Activated CD8-positive, alpha-beta T cell treated with anti-CD3 and anti-CD28 coated beads for 36 hours (primary cell): ENCODE measurements at regions of chr1 and their contacts with region 1.

Region 1: GRCh38 chr1:23496490-23497181 is 12.7 kb upstream of the ASAP3 start:
- DNase-seq: no peak
- ATAC-seq: peak; percentile 13
- H3K4me3 Mint-ChIP-seq: no peak overlapping the region
- H3K27ac Mint-ChIP-seq: no peak overlapping the region
- H3K4me1 Mint-ChIP-seq: no peaks in the 10 kb centered on the region
- H3K27me3 Mint-ChIP-seq: no peaks in the 10 kb centered on the region
- CTCF ChIP-seq: no peak

Region 2: DNA sequence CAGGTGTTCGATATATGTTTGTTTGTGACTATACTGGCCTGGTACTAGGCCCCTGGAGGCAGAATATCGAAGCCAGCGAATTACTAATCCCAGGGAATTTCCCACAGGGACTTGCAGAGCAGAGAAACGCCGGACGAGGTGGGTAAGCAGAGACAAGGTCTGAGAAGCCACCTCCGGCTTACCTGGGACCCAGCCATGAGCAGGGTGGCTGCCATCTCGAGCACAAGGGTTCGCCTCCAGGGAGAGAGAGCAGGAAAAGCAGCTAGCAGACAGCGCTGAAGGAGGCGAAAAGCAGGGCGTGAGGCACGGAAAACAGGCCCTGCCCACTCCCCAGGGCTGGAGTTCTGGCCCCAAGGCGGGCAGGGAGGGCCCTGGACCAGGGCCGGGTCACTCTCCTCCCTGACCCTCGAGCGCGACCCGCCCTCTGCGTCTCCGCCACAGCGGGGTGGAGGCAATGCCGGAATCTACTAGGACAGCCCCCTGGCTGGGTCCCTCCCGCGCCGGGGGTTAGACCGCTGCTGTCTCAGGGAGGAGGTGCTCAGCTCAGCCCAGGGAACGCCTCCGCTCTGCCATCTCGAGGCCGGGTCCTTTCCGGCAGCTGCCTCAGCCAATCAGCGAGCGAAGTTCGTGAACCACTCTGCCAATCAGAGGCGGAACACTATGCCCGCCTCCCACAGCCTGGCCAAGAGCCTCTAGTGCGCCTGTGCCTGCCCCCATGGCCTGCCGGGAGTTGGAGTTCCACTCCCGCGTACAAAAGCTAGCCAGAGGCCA is 128.7 kb before region 1 on chr1:
- CTCF ChIA-PET with region 1: interaction called, 13 read pairs
- POLR2A ChIA-PET with region 1: no interaction called
- intact Hi-C with region 1: no loop called
- DNase-seq: peak; percentile 99
- ATAC-seq: peak; percentile 94
- H3K4me3 Mint-ChIP-seq: peak overlapping the region; percentile 95
- H3K27ac Mint-ChIP-seq: peak overlapping the region; percentile 98
- H3K4me1 Mint-ChIP-seq: peaks cover 26% of the 10 kb centered on the region
- H3K27me3 Mint-ChIP-seq: no peaks in the 10 kb centered on the region
- CTCF ChIP-seq: no peak

Region 3: DNA sequence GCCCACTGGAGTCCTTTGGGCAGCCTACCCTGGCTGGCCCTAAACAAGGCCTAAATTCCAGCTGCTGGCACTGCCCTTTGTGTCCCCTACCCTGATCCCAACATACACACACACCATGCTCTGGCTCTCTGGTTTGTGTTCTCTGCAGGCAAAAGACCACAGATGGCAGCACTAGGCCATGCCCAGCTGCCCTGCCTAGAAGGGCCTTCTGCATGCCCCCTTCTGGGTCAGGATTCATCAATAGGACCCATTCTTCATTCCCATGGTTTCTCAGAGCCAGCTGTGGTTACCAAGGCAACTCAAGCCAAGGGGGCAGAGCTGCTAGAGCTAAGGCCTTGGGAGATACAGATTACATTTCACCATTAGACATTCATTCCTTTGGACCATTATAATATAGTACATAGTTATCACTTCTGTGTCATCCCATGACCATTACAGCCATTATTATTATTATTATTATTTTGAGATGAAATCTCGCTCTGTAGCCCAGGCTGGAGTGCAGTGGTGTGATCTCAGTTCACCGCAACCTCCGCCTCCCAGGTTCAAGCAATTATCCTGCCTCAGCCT is 30.1 kb before region 1 on chr1:
- CTCF ChIA-PET with region 1: interaction called, 20 read pairs
- POLR2A ChIA-PET with region 1: no interaction called
- intact Hi-C with region 1: no loop called
- DNase-seq: no peak
- ATAC-seq: no peak
- H3K4me3 Mint-ChIP-seq: no peak overlapping the region
- H3K27ac Mint-ChIP-seq: no peak overlapping the region
- H3K4me1 Mint-ChIP-seq: no peaks in the 10 kb centered on the region
- H3K27me3 Mint-ChIP-seq: no peaks in the 10 kb centered on the region
- CTCF ChIP-seq: no peak

Region 4: DNA sequence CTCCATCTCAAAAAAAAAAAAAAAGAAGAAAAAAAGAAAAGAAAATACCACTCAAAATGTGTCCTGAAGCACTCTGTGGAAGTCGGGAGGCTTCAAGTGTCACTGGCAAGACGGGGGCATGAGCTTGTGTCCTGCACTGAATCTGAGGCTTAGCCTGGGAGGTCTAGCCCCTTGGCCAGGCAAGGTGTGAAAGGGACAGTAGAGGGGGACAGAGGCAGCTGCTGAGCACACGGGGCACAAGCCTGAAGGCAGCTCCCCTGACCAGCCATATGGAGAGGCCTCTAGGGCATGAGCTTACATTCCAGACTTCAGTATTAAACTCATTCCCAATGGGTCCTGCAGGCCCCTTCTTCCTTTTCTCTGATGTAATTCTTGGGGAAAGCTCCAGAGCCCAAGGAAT is 10.9 kb after region 1 on chr1:
- CTCF ChIA-PET with region 1: interaction called, 43 read pairs
- POLR2A ChIA-PET with region 1: no interaction called
- intact Hi-C with region 1: no loop called
- DNase-seq: no peak
- ATAC-seq: no peak
- H3K4me3 Mint-ChIP-seq: no peak overlapping the region
- H3K27ac Mint-ChIP-seq: no peak overlapping the region
- H3K4me1 Mint-ChIP-seq: no peaks in the 10 kb centered on the region
- H3K27me3 Mint-ChIP-seq: no peaks in the 10 kb centered on the region
- CTCF ChIP-seq: no peak

Region 5: DNA sequence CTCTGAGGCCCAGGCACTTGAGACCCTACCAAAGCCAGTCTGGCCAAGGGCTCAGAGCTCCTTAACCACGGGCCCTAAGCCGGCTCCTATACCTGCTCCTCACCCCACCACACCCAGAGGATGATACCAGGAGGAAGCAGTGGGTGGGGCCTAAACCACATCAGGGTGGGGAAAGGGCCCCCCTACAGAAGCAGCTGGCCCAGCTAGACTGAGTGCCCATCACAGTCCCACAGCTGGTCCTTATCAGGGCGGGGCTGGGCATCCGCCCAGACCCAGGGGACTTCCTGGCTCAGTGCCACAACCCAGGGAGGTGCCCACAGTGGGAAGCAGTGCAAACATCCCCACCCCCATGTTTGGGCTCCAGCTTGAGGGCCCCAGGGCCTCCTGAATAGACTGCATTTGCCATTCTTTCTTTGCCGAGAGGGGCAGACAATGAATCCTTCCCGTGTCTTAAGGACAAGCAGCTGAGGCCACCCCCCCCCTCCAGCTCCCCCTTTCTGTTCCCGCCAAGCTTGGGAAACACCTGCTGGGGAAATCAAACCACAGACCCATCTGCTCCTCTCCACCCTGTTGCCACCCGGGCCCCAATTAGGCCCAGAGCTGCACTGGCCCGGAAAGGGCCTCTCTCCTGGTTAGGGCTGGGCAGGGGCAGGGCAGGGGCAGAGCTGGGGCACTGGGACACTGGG is 28.2 kb after region 1 on chr1:
- CTCF ChIA-PET with region 1: interaction called, 202 read pairs
- POLR2A ChIA-PET with region 1: interaction called, 10 read pairs
- intact Hi-C with region 1: no loop called
- DNase-seq: peak; percentile 42
- ATAC-seq: peak; percentile 12
- H3K4me3 Mint-ChIP-seq: no peak overlapping the region
- H3K27ac Mint-ChIP-seq: no peak overlapping the region
- H3K4me1 Mint-ChIP-seq: peaks cover 59% of the 10 kb centered on the region
- H3K27me3 Mint-ChIP-seq: no peaks in the 10 kb centered on the region
- CTCF ChIP-seq: no peak

Region 6: GRCh38 chr1:23539698-23540266 is 43.1 kb after region 1 on chr1:
- CTCF ChIA-PET with region 1: interaction called, 268 read pairs
- POLR2A ChIA-PET with region 1: interaction called, 5 read pairs
- intact Hi-C with region 1: loop called (anchors 1 kb)
- DNase-seq: peak; percentile 98
- ATAC-seq: peak; percentile 97
- H3K4me3 Mint-ChIP-seq: peak overlapping the region; percentile 45
- H3K27ac Mint-ChIP-seq: peak overlapping the region; percentile 74
- H3K4me1 Mint-ChIP-seq: peaks cover 9% of the 10 kb centered on the region
- H3K27me3 Mint-ChIP-seq: no peaks in the 10 kb centered on the region
- CTCF ChIP-seq: peak; percentile 76

Region 7: DNA sequence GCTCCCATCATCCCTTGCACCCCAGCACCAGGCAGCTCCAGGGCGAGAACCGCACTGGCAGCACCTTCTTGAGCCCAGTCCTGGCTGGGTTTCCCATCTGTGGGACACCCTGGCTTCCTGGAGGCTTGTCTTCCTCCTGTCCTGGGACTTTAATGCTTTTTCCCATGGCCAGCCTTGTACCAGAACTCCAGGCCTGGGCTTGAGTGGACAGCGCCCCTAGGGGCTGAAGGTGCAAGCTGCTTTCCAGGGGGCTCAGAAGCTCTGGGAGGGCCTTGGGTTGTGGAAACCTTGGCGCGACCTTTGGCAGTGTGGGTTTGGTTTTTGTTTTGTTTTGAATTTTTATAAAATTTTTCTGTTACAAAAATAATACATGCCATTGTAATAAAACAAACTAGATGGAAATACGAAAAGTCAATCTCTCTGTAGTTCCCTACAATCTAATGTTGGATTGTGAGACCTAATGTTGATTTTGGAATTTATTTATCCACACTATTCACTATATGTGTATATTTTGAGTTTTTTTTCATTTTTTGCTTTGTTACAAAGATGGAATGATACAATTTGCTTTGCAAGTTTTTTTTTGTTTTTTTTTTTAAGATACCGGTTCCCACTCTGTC is 161.1 kb after region 1 on chr1:
- CTCF ChIA-PET with region 1: interaction called, 21 read pairs
- POLR2A ChIA-PET with region 1: no interaction called
- intact Hi-C with region 1: no loop called
- DNase-seq: peak; percentile 74
- ATAC-seq: peak; percentile 92
- H3K4me3 Mint-ChIP-seq: no peak overlapping the region
- H3K27ac Mint-ChIP-seq: no peak overlapping the region
- H3K4me1 Mint-ChIP-seq: no peaks in the 10 kb centered on the region
- H3K27me3 Mint-ChIP-seq: no peaks in the 10 kb centered on the region
- CTCF ChIP-seq: peak; percentile 89